ENCODE measurements at regions of chr4 and their contacts with region 1.

Region 1: DNA sequence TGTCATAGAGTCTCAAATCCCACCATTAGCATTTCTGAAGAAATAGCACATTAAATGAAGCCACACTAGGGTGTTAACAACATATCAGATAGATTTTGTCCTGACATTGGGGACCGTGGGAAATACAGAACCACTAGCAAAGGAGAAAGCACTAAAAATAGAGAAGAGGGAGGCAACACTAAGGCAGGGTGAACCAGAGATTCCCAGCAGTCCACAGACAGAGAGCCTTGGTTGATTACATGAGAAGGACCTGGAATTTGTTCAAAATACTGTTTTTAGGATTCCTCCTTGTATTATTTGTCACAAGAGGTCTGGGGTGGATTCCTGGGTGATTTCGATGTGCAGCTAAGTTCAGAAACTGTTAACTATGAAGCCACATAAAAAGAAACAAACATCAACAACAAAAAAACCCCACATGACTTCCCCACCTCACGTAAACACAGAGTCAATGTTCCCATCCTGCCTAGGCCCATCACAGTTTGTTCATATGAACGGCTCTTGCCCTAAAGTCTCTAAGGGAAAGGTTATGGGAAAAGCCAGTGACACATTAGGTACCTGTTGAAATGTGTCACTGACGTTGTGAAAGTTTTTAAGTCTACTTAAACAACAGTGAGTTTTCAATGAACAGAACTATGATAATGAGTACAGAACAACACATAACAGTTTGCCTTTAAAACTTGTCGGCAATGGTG is 23.6 kb upstream of the GRSF1 start:
- DNase-seq: peak; percentile 39
- H3K4me3 Mint-ChIP-seq: no peak overlapping the region
- H3K27ac Mint-ChIP-seq: peak overlapping the region; percentile 57
- H3K4me1 Mint-ChIP-seq: peaks cover 12% of the 10 kb centered on the region
- H3K27me3 Mint-ChIP-seq: no peaks in the 10 kb centered on the region

Region 2: GRCh38 chr4:70678383-70678999 is 184.8 kb before region 1 on chr4:
- CTCF ChIA-PET with region 1: no interaction called
- POLR2A ChIA-PET with region 1: no interaction called
- intact Hi-C with region 1: no loop called
- DNase-seq: no peak
- H3K4me3 Mint-ChIP-seq: no peak overlapping the region
- H3K27ac Mint-ChIP-seq: no peak overlapping the region
- H3K4me1 Mint-ChIP-seq: peaks cover 8% of the 10 kb centered on the region
- H3K27me3 Mint-ChIP-seq: peaks cover 2% of the 10 kb centered on the region

Region 3: GRCh38 chr4:70801265-70801809 is 61.9 kb before region 1 on chr4:
- CTCF ChIA-PET with region 1: no interaction called
- POLR2A ChIA-PET with region 1: no interaction called
- intact Hi-C with region 1: loop called (anchors 1 kb)
- DNase-seq: peak; percentile 60
- H3K4me3 Mint-ChIP-seq: no peak overlapping the region
- H3K27ac Mint-ChIP-seq: no peak overlapping the region
- H3K4me1 Mint-ChIP-seq: peaks cover 10% of the 10 kb centered on the region
- H3K27me3 Mint-ChIP-seq: no peaks in the 10 kb centered on the region

Region 4: GRCh38 chr4:70874268-70875156 is 11.3 kb after region 1 on chr4:
- CTCF ChIA-PET with region 1: no interaction called
- POLR2A ChIA-PET with region 1: no interaction called
- intact Hi-C with region 1: no loop called
- DNase-seq: no peak
- H3K4me3 Mint-ChIP-seq: no peak overlapping the region
- H3K27ac Mint-ChIP-seq: no peak overlapping the region
- H3K4me1 Mint-ChIP-seq: no peaks in the 10 kb centered on the region
- H3K27me3 Mint-ChIP-seq: peaks cover 1% of the 10 kb centered on the region

Region 5: GRCh38 chr4:70927502-70928137 is 64.4 kb after region 1 on chr4:
- CTCF ChIA-PET with region 1: no interaction called
- POLR2A ChIA-PET with region 1: no interaction called
- intact Hi-C with region 1: loop called (anchors 2 kb)
- DNase-seq: peak; percentile 60
- H3K4me3 Mint-ChIP-seq: no peak overlapping the region
- H3K27ac Mint-ChIP-seq: no peak overlapping the region
- H3K4me1 Mint-ChIP-seq: peaks cover 31% of the 10 kb centered on the region
- H3K27me3 Mint-ChIP-seq: no peaks in the 10 kb centered on the region

Region 6: DNA sequence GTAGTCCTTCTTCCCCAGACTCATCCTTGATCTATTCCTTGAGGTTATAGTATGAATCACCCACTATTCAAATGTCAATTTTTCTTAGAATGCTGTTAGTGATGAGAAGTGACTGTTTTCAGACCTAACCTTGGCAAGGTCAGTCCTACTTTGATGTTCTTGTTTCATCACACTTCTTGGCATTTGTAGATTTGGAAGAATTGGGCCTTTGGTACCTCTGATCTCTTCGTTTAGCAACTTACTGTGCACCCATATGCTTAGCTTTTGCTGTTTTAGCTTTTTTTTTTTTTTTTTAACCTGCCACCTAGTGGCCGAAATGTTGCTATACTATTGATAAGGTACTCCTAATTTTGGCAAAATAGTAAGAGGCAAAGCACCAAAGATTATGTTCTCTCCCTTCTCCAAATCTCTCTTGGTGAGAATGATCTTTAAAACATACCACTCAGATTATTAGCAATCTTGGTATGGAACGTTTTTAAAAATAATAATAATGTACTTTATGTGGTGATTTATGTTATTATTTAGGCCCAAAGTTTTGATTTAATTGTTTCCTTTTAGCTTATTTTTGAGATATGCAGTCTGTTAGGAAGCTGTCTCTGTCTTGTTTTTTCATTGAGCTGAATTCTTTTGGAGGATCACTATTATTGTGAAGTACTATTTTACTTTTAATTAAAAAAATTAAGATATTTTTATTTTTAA is 146.8 kb after region 1 on chr4:
- CTCF ChIA-PET with region 1: no interaction called
- POLR2A ChIA-PET with region 1: no interaction called
- intact Hi-C with region 1: loop called (anchors 1 kb)
- DNase-seq: no peak
- H3K4me3 Mint-ChIP-seq: no peak overlapping the region
- H3K27ac Mint-ChIP-seq: peak overlapping the region; percentile 82
- H3K4me1 Mint-ChIP-seq: peaks cover 31% of the 10 kb centered on the region
- H3K27me3 Mint-ChIP-seq: no peaks in the 10 kb centered on the region